Heart left ventricle (tissue), 16 donors: ENCODE measurements at regions of chr9 and their contacts with region 1.

Region 1: GRCh38 chr9:2620919-2621679 is 488 bp upstream of the VLDLR start:
- DNase-seq: peak; percentile 76 to 90 (median 89)
- ATAC-seq: peak; percentile 74 to 82 (median 82)
- H3K4me3 ChIP-seq: peak overlapping the region; percentile 70 to 94 (median 86)
- H3K27ac ChIP-seq: peak overlapping the region; percentile 55 to 98 (median 94)
- H3K4me1 ChIP-seq: peaks cover 0 to 38% (median 23%) of the 10 kb centered on the region in 12 donors
- H3K27me3 ChIP-seq: peaks cover 0 to 44% (median 0%) of the 10 kb centered on the region in 9 donors
- CTCF ChIP-seq: peak in 6 of 12 donors; percentile 12 to 40 (median 21)
- POLR2A ChIP-seq: peak in 1 of 2 donors; percentile 64

Region 2: DNA sequence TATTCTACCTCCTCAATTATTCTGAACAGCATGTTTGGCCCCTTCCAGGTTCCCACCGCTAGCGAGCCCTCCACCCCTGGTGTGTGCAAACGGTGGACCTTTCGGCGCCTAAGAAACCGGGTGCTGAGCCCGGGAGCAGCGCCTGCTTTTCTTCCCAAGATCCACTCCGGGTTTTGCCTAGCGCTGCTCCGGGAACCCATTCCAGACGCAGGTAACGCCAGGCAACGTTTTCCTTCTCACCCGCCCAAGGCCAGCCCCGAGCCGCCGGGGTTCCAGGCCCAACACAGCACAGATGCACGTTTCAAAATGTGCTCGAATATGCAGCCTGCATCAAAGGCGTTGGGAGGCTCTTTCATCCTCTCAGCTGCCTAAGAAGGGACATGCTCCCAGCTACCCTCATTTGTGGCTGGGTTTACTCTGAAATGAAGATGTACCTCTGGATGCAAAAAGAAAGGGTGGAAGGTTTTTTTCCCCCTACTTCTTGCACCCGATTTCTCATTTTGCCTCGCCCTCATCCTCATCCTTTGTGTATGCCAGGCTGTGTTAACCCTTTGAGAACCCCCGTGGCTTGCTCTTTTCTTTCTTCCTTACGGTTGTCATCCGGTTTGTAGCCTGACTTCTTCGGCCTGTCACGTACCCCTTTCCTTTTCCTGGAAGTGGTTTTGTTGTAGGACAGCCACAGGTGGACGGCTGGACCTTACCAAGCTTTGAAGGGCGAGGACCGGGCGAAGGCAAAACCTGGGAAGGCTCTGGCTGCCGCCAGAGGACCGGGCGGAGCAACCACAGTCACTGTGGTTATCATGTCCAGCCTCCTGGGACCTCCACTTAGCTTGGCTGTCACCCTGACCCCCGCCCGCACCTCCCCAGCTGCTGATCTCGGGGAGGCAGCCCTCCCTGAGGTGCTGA is 379.0 kb before region 1 on chr9:
- intact Hi-C with region 1: loop called in 2 of 10 experiments (anchors 10 kb)
- DNase-seq: peak; percentile 82 to 87 (median 84)
- ATAC-seq: peak; percentile 88 to 96 (median 96)
- H3K4me3 ChIP-seq: peak overlapping the region; percentile 37 to 67 (median 57)
- H3K27ac ChIP-seq: peak overlapping the region in 11 of 12 donors; percentile 42 to 77 (median 65)
- H3K4me1 ChIP-seq: peaks cover 0 to 20% (median 6%) of the 10 kb centered on the region in 12 donors
- H3K27me3 ChIP-seq: no peaks in the 10 kb centered on the region
- CTCF ChIP-seq: peak in 1 of 12 donors; percentile 7
- POLR2A ChIP-seq: peak in 1 of 2 donors; percentile 41

Region 3: GRCh38 chr9:2559212-2560152 is 61.6 kb before region 1 on chr9:
- intact Hi-C with region 1: loop called in 2 of 10 experiments (anchors 5 kb)
- DNase-seq: peak; percentile 80 to 95 (median 89)
- ATAC-seq: peak; percentile 98 to 99 (median 99)
- H3K4me3 ChIP-seq: peak overlapping the region in 1 of 12 donors; percentile 15
- H3K27ac ChIP-seq: peak overlapping the region; percentile 73 to 91 (median 84)
- H3K4me1 ChIP-seq: peaks cover 3 to 33% (median 22%) of the 10 kb centered on the region in 12 donors
- H3K27me3 ChIP-seq: no peaks in the 10 kb centered on the region
- CTCF ChIP-seq: peak in 1 of 12 donors; percentile 7
- POLR2A ChIP-seq: peak in 1 of 2 donors; percentile 16

Region 4: GRCh38 chr9:2662496-2662895 is 41.4 kb after region 1 on chr9:
- intact Hi-C with region 1: loop called in 1 of 10 experiments (anchors 5 kb)
- DNase-seq: no peak
- ATAC-seq: peak in 2 of 4 donors; percentile 13 to 16
- H3K4me3 ChIP-seq: no peak overlapping the region
- H3K27ac ChIP-seq: peak overlapping the region in 10 of 12 donors; percentile 58 to 88 (median 74)
- H3K4me1 ChIP-seq: peaks cover 0 to 44% (median 24%) of the 10 kb centered on the region in 12 donors
- H3K27me3 ChIP-seq: no peaks in the 10 kb centered on the region
- CTCF ChIP-seq: peak in 2 of 12 donors; percentile 14 to 25
- POLR2A ChIP-seq: no peak